ENCODE measurements at regions of chr16 and their contacts with region 1.

Region 1: DNA sequence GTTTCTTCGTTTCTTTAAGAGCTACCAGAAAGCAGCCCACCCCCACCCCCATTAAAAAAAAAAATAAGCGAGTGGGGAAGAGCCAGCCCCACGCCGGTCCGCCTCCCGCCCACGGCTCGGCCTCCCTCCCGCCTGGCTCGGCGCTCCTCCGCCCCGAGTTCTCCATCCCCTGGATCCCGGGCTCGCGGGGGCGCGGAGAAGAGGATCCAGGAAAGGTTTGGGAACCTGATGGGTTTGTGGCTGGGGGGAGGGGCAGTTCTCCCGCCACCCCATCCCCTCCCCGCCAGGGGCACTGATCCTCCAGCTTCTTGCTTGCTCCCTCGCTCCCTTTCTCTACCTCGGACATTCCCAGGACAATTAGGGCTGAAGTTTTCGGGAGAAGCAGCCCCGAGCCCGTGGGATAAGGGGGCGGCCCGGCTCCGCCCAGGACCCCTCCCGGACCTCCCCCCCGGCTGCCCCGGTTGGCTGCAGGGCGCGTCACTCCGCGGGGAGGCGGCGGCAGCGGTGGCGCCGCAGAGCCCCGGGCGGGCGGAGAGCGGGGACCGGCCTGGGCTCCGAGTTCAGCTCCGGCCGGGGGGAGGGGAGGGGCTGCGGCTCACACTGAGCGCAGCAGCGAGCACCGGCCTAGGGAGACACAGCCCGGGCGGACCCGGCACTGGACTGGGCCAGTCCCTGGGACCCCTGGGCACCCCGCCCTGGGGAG is 1.0 kb upstream of the SALL1 start:
- DNase-seq: peak; percentile 41 to 97 (median 88)
- H3K4me3 ChIP-seq: peak overlapping the region; percentile 45 to 97 (median 79)
- H3K27ac ChIP-seq: peak overlapping the region; percentile 79 to 99 (median 98)
- H3K27me3 ChIP-seq: peaks cover 0 to 90% (median 51%) of the 10 kb centered on the region in 45 donors
- CTCF ChIP-seq: peak in 4 of 56 donors; percentile 2 to 37 (median 31)

Region 2: GRCh38 chr16:51237861-51238378 is 85.8 kb after region 1 on chr16:
- intact Hi-C with region 1: loop called in 1 of 2 experiments (anchors 2 kb)
- DNase-seq: no peak
- H3K4me3 ChIP-seq: peak overlapping the region in 11 of 59 donors; percentile 3 to 31 (median 18)
- H3K27ac ChIP-seq: peak overlapping the region; percentile 4 to 99 (median 94)
- H3K27me3 ChIP-seq: no peaks in the 10 kb centered on the region
- CTCF ChIP-seq: peak in 1 of 56 donors; percentile 16

Region 3: DNA sequence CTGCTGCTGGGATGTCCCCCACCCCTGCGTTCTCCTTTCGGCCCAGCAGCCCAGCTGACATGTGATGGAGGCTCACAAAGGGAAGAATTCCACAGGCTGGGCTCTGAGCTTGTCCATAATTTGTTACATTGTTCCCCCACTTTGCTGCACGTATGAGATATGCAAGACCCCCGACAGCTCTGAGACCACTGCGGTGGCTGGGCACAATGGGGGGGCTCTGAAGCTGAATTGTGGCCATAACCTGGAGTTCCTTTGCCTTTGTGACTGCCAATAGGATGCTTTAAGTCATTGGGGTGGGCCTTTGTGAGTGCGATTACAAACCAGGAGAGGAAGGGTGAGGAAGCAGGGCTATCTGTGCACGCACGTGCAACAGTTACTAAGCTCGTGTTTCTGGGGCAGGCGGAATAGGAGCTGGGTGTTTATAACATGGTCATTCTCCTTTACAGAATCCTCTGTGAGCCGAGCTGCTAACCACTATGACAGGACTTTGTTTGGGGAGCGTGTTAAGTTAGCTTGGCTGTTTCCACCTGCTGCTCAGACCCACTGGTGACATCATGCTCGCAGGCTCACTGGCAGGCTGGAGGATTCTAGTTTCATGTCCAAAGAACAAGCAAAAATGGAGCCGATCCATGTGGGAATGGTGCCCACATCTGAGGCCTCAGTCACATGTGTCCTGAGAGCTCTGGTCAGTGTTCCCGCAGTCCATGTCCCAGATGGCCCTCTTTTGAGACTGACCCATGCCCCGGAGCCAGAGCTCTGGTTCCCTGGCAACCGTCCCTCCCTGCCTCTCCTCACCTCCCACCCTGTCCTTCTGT is 207.2 kb after region 1 on chr16:
- intact Hi-C with region 1: loop called (anchors 5 kb)
- DNase-seq: peak; percentile 9 to 89 (median 76)
- H3K4me3 ChIP-seq: peak overlapping the region in 5 of 59 donors; percentile 7 to 27 (median 14)
- H3K27ac ChIP-seq: peak overlapping the region in 58 of 59 donors; percentile 2 to 93 (median 81)
- H3K27me3 ChIP-seq: no peaks in the 10 kb centered on the region
- CTCF ChIP-seq: peak in 2 of 56 donors; percentile 7 to 20

Region 4: GRCh38 chr16:51577621-51578303 is 425.6 kb after region 1 on chr16:
- intact Hi-C with region 1: no loop called
- DNase-seq: no peak
- H3K4me3 ChIP-seq: no peak overlapping the region
- H3K27ac ChIP-seq: no peak overlapping the region
- H3K27me3 ChIP-seq: peaks cover 0 to 10% (median 0%) of the 10 kb centered on the region in 45 donors
- CTCF ChIP-seq: no peak

Region 5: DNA sequence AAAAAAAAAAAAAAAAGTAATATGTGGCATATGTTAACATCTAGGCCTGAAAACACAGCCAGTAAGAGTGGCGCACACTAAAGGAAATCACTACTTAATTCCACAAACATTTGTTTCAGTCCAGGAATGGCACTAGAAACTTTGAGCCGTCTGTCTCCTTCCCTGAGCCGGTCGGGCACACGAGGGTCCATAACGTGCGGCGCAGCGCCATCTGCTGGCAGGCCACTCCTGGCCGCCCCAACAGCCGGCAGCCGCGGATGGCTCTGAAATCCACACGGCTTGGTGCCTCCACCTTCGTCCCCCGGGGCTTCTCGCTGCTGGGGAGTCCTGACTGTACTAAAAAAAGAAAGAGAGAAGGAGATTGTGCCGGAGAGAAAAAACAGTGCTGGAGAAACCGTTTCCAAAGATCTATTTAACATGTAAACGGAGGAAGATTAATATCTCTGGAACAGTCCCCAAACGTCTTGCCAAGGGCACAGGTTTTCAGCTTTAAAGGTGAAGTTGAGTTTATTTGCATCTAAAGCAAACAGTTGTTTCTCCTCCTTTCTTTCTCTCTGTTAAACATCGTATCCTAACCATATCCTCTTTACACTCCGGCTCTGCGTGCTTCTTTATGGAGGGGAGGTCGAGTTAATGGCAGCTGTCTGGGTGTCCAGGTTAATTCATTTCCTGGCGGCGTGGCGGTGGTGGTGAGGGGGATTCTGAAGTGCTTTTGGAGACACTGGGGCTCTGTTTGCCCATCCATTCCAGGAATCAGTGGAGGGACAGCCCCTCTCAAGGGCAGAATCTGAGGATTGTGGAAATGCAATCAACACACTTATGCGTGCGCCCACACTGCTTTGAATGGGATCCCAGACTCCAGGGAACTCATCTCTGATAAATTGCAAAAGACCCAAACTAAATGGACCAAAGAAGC is 610.2 kb after region 1 on chr16:
- intact Hi-C with region 1: loop called (anchors 5 kb)
- DNase-seq: peak; percentile 26 to 90 (median 85)
- H3K4me3 ChIP-seq: peak overlapping the region in 44 of 59 donors; percentile 5 to 61 (median 38)
- H3K27ac ChIP-seq: peak overlapping the region in 4 of 59 donors; percentile 20 to 34 (median 30)
- H3K27me3 ChIP-seq: peaks cover 0 to 32% (median 3%) of the 10 kb centered on the region in 45 donors
- CTCF ChIP-seq: peak; percentile 83 to 99 (median 95)